CD8-positive, alpha-beta memory T cell (primary cell): ENCODE measurements at regions of chr14 and their contacts with region 1.

Region 1: GRCh38 chr14:92712654-92713051 is 35.8 kb downstream of the LGMN start:
- DNase-seq: no peak
- H3K4me3 ChIP-seq: no peak overlapping the region
- H3K4me3 Mint-ChIP-seq: no peak overlapping the region
- H3K27ac ChIP-seq: no peak overlapping the region
- H3K27ac Mint-ChIP-seq: no peak overlapping the region
- H3K4me1 ChIP-seq: no peaks in the 10 kb centered on the region
- H3K4me1 Mint-ChIP-seq: peaks cover 3 to 4% (median 3%) of the 10 kb centered on the region in 3 donors
- H3K27me3 ChIP-seq: no peaks in the 10 kb centered on the region
- H3K27me3 Mint-ChIP-seq: peaks cover 4 to 7% of the 10 kb centered on the region in 2 donors

Region 2: DNA sequence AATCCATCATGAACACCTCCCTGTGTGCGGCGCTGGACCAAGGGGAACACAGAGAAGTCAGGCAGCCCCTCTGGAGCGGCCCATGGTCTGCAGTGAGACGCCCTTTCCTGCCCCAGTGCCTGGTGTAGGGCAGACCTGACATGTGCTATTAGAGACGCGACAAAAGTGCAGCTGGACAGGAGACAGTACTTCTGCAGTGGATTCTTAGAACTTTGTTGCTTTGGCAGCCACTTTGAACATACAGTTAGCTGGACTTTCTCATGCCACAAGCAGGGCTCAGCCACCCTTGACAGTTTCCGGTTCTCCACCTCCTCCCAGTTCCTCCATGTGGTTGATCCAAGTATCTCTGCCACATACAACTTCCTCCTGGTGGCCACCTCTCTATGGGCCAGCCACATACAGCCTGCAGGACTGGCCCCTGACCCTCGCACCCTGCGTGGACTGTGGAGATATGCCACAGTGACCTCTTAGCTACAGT is 10.2 kb before region 1 on chr14:
- CTCF ChIA-PET with region 1: no interaction called
- POLR2A ChIA-PET with region 1: no interaction called
- DNase-seq: no peak
- H3K4me3 ChIP-seq: no peak overlapping the region
- H3K4me3 Mint-ChIP-seq: no peak overlapping the region
- H3K27ac ChIP-seq: no peak overlapping the region
- H3K27ac Mint-ChIP-seq: peak overlapping the region in 2 of 8 donors; percentile 12 to 72
- H3K4me1 ChIP-seq: no peaks in the 10 kb centered on the region
- H3K4me1 Mint-ChIP-seq: no peaks in the 10 kb centered on the region
- H3K27me3 ChIP-seq: no peaks in the 10 kb centered on the region
- H3K27me3 Mint-ChIP-seq: peaks cover 19 to 31% of the 10 kb centered on the region in 2 donors

Region 3: GRCh38 chr14:92783816-92784431 is 71.3 kb after region 1 on chr14:
- CTCF ChIA-PET with region 1: interaction called, 22 read pairs
- POLR2A ChIA-PET with region 1: no interaction called
- DNase-seq: peak in 2 of 5 donors; percentile 26 to 50
- H3K4me3 ChIP-seq: no peak overlapping the region
- H3K4me3 Mint-ChIP-seq: no peak overlapping the region
- H3K27ac ChIP-seq: no peak overlapping the region
- H3K27ac Mint-ChIP-seq: no peak overlapping the region
- H3K4me1 ChIP-seq: no peaks in the 10 kb centered on the region
- H3K4me1 Mint-ChIP-seq: no peaks in the 10 kb centered on the region
- H3K27me3 ChIP-seq: no peaks in the 10 kb centered on the region
- H3K27me3 Mint-ChIP-seq: no peaks in the 10 kb centered on the region